ENCODE measurements at regions of chr10 and their contacts with region 1.

Region 1: DNA sequence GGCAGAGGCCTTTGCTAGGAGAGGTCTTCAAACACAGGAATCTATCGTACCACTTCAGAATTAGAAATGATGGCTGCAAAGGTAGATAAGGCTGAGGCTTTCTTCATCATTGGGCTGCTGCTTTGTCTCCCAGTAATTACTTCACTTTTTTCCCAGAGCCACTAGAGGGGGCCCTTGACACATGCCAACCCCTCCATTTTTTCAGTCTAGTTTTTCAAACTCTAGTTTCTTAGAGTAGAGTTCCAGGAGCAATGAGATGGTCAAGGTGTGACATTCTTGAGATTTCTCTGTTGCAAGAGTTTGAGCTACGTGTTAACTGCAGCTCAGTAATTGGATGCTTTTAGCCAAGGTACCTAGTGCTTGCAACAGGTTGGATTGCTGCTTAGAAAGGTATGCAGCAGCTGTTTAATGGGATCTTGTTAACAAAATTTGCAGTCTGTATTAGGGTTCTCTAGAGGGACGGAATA is 33.8 kb upstream of the RBM20 start:
- DNase-seq: no peak

Region 2: DNA sequence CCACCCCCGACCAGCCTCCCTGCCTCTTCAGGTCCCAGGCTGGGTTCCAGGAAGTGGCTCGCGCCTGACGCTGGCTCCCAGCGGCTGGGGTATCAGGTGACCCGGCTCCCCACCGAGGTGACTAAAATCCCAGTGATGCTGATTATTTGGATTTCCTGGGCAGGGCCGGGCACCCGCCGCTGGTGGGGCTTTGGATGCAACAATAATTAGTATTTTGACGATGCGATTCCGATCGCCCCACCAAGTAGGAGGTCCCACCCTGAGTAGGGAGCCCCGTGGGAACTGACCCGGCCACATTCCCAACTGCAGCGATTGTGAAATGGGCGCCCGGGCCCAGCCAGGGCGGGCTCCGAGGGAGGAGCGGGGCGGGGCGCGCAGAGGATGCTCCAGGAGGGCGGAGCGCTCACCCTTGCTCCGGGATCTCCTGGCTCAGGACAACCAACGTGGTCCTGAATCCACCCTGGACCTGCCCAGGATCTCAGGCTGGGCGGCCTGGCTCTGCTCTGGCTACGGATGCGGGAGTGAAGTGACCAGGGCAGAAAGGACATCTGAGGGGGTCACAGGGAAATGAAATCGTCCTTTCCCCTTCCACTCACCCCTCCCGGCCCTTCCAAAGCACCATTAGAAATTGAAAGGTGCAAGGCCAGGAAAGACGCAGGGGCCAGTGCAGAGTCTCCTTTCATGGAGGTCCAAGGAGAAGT is 80.1 kb before region 1 on chr10:
- intact Hi-C with region 1: no loop called
- DNase-seq: peak; percentile 87

Region 3: GRCh38 chr10:110671788-110672579 is 61.6 kb after region 1 on chr10:
- intact Hi-C with region 1: loop called in 1 of 2 experiments (anchors 10 kb)
- DNase-seq: peak; percentile 92

Region 4: DNA sequence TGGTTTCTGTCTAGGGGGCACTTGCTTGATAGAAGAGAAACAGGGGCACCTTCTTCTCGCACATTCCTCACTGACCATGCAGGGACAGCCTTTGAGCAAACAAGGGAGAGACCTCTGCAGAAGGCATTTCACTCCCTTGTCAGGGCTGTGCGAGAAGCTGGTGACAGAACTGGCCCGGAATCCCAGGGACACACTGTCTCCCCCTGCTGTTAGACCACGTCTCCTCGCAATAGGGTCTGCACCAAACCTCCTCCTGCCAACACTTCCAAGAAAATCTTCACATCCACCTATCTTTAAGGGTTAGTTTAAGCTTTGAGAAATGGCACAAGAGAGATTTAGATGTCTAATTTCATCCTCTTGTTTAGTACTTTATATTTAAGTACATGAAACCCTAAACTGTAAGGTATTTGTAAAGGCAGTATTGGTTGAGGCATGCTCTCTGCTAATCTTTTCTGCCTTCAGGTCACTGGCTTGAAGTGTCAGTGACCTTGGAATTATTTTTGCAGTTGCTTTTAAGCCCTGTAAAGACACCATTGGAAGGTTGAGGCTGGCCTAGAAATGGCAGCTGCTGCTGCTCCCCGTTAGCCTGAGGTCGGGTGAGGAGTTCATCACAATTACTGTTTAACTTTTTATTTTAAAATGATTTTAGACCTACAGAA is 70.8 kb after region 1 on chr10:
- intact Hi-C with region 1: loop called (anchors 10 kb)
- DNase-seq: no peak

Region 5: GRCh38 chr10:110724116-110724921 is 114.0 kb after region 1 on chr10:
- intact Hi-C with region 1: no loop called
- DNase-seq: no peak